ENCODE measurements at regions of chr11 and their contacts with region 1.

Region 1: GRCh38 chr11:75365711-75366181 is 14.3 kb upstream of the ARRB1 start:
- DNase-seq: no peak
- H3K4me3 Mint-ChIP-seq: no peak overlapping the region
- H3K27ac Mint-ChIP-seq: no peak overlapping the region
- H3K4me1 Mint-ChIP-seq: peaks cover 17% of the 10 kb centered on the region
- H3K27me3 Mint-ChIP-seq: peaks cover 11% of the 10 kb centered on the region

Region 2: GRCh38 chr11:75303544-75304224 is 62.1 kb before region 1 on chr11:
- CTCF ChIA-PET with region 1: no interaction called
- POLR2A ChIA-PET with region 1: no interaction called
- DNase-seq: no peak
- H3K4me3 Mint-ChIP-seq: no peak overlapping the region
- H3K27ac Mint-ChIP-seq: no peak overlapping the region
- H3K4me1 Mint-ChIP-seq: no peaks in the 10 kb centered on the region
- H3K27me3 Mint-ChIP-seq: no peaks in the 10 kb centered on the region

Region 3: GRCh38 chr11:75313513-75314272 is 52.1 kb before region 1 on chr11:
- CTCF ChIA-PET with region 1: no interaction called
- POLR2A ChIA-PET with region 1: no interaction called
- DNase-seq: no peak
- H3K4me3 Mint-ChIP-seq: no peak overlapping the region
- H3K27ac Mint-ChIP-seq: no peak overlapping the region
- H3K4me1 Mint-ChIP-seq: peaks cover 4% of the 10 kb centered on the region
- H3K27me3 Mint-ChIP-seq: no peaks in the 10 kb centered on the region

Region 4: DNA sequence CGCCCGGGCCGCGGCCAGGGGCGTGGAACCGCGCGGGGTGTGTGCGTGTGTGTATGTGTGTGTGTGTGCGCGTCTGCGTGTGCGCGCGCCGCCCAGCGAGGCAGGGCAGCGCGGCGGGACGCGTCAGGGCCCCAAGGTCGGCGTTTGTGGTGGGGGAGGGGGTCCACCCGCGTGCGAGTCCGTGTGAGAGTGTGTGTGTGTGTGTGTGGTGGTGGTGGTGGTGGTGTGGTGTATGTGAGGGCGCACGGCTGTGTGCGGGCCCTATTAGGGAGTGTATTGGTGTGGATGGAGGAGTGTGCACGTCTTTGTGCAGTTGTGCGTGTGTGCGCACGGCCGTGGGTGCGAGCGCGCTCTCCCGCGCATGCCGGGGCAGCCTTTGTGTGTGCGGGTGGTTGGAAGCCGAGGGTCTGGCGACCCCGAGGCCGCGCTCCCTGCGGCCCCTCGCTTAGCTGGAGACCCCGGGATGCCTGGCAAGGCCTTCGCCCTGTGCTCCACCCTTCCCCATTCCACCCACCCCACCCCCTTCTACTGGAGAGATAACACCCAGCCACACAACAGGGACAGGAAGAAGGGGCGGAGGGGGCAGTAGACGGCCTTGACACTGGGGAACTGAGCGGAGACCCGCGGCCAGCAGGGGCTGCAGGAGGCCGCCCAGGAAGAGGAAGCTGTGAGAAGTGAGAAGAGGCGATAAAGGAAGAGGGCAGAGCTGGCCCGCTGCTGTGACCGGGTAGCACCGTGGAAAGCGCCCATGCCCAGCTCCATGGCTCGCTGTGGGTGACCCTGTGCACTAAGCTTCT is 13.8 kb before region 1 on chr11:
- CTCF ChIA-PET with region 1: interaction called, 14 read pairs
- POLR2A ChIA-PET with region 1: interaction called, 9 read pairs
- DNase-seq: peak; percentile 65
- H3K4me3 Mint-ChIP-seq: peak overlapping the region; percentile 85
- H3K27ac Mint-ChIP-seq: peak overlapping the region; percentile 75
- H3K4me1 Mint-ChIP-seq: peaks cover 33% of the 10 kb centered on the region
- H3K27me3 Mint-ChIP-seq: peaks cover 2% of the 10 kb centered on the region

Measured in activated CD4-positive, alpha-beta memory T cell treated with anti-CD3 and anti-CD28 coated beads, Interleukin-2, amount 10 ng/mL, durations not matched to agents 7 days and 5 days (primary cell).